ENCODE measurements at regions of chr9 and their contacts with region 1.

Region 1: DNA sequence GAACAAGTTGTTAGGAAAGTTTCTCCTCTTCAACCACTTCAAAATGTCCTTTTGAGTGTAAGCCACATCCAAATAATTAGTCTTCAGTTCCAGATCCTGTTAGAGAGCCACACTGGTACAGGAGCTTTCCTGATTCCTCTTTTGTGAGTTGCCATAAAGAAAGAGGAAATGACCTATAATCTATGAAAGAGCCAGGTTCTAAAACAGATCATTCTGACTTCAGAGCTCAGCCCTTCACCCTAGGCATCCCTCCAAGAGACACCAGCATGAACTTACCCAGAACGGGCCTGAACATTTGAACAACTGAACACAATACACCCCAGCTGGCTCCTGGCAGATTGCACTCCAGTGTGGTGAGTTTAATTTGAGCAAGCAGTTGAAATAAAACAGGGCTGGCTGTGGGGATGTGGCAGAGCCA is 25.7 kb downstream of the SLC1A1 start:
- DNase-seq: no peak
- ATAC-seq: no peak
- H3K4me3 ChIP-seq: no peak overlapping the region
- H3K4me3 Mint-ChIP-seq: no peak overlapping the region
- H3K27ac ChIP-seq: no peak overlapping the region
- H3K27ac Mint-ChIP-seq: peak overlapping the region in 2 of 9 donors; percentile 1 to 3
- H3K4me1 ChIP-seq: no peaks in the 10 kb centered on the region
- H3K4me1 Mint-ChIP-seq: peaks cover 0 to 12% (median 7%) of the 10 kb centered on the region in 7 donors
- H3K27me3 ChIP-seq: no peaks in the 10 kb centered on the region
- H3K27me3 Mint-ChIP-seq: peaks cover 0 to 7% (median 0%) of the 10 kb centered on the region in 5 donors

Region 2: GRCh38 chr9:4435197-4435596 is 80.8 kb before region 1 on chr9:
- CTCF ChIA-PET with region 1: no interaction called
- POLR2A ChIA-PET with region 1: no interaction called
- intact Hi-C with region 1: no loop called
- DNase-seq: no peak
- ATAC-seq: no peak
- H3K4me3 ChIP-seq: no peak overlapping the region
- H3K4me3 Mint-ChIP-seq: no peak overlapping the region
- H3K27ac ChIP-seq: no peak overlapping the region
- H3K27ac Mint-ChIP-seq: peak overlapping the region in 1 of 9 donors; percentile 10
- H3K4me1 ChIP-seq: no peaks in the 10 kb centered on the region
- H3K4me1 Mint-ChIP-seq: peaks cover 0 to 9% (median 6%) of the 10 kb centered on the region in 7 donors
- H3K27me3 ChIP-seq: no peaks in the 10 kb centered on the region
- H3K27me3 Mint-ChIP-seq: peaks cover 0 to 10% (median 3%) of the 10 kb centered on the region in 5 donors

Region 3: DNA sequence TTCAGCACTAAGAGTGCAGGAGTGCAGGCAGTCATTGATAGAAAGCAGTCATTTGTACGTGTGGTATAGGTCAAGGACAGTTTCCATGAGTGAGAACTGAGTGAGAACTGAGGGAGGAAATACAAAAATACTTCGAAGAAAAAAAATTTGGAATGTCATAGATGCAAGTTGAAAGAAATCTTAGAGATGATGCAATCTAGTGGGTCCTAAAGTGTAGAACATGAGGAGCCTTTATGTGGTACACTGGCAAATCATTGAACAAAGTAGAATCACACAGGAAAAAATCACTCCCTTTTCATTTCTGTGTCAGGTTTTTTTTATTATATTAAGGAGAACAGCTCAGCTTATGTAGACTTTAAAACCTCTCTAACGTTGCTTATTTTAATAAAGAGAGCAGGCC is 52.1 kb before region 1 on chr9:
- CTCF ChIA-PET with region 1: no interaction called
- POLR2A ChIA-PET with region 1: no interaction called
- intact Hi-C with region 1: loop called in 1 of 2 experiments (anchors 10 kb)
- DNase-seq: no peak
- ATAC-seq: no peak
- H3K4me3 ChIP-seq: no peak overlapping the region
- H3K4me3 Mint-ChIP-seq: no peak overlapping the region
- H3K27ac ChIP-seq: no peak overlapping the region
- H3K27ac Mint-ChIP-seq: no peak overlapping the region
- H3K4me1 ChIP-seq: no peaks in the 10 kb centered on the region
- H3K4me1 Mint-ChIP-seq: peaks cover 0 to 6% (median 2%) of the 10 kb centered on the region in 7 donors
- H3K27me3 ChIP-seq: no peaks in the 10 kb centered on the region
- H3K27me3 Mint-ChIP-seq: peaks cover 0 to 12% (median 8%) of the 10 kb centered on the region in 5 donors

Measured in naive thymus-derived CD4-positive, alpha-beta T cell (primary cell).